ENCODE measurements at regions of chr1 and their contacts with region 1.

Region 1: GRCh38 chr1:40796939-40797667 is 13.5 kb downstream of the KCNQ4 start:
- DNase-seq: no peak
- ATAC-seq: no peak
- H3K4me3 ChIP-seq: no peak overlapping the region
- H3K27ac ChIP-seq: no peak overlapping the region
- H3K4me1 ChIP-seq: peaks cover 17 to 35% of the 10 kb centered on the region in 2 experiments
- H3K27me3 ChIP-seq: no peaks in the 10 kb centered on the region
- CTCF ChIP-seq: no peak
- EP300 ChIP-seq: no peak
- POLR2A ChIP-seq: no peak
- RAD21 ChIP-seq: no peak

Region 2: GRCh38 chr1:40704817-40705733 is 92.0 kb before region 1 on chr1:
- CTCF ChIA-PET with region 1: no interaction called
- POLR2A ChIA-PET with region 1: no interaction called
- in situ Hi-C with region 1: no loop called
- intact Hi-C with region 1: no loop called
- DNase-seq: peak; percentile 28 to 68 (median 38)
- ATAC-seq: no peak
- H3K4me3 ChIP-seq: no peak overlapping the region
- H3K27ac ChIP-seq: peak overlapping the region; percentile 5; the same call in 1 of the 3 replicates
- H3K4me1 ChIP-seq: peaks cover 0 to 26% of the 10 kb centered on the region in 2 experiments; a peak in 4 of 5 replicates
- H3K27me3 ChIP-seq: no peaks in the 10 kb centered on the region
- CTCF ChIP-seq: no peak
- EP300 ChIP-seq: peak; percentile 26; the same call in 1 of the 2 replicates
- POLR2A ChIP-seq: no peak
- RAD21 ChIP-seq: no peak

Region 3: GRCh38 chr1:40783001-40783905 is 13.8 kb before region 1 on chr1 and contains the start of gene KCNQ4:
- CTCF ChIA-PET with region 1: no interaction called
- POLR2A ChIA-PET with region 1: interaction called, 17 read pairs
- in situ Hi-C with region 1: no loop called
- intact Hi-C with region 1: no loop called
- DNase-seq: peak; percentile 79 to 90 (median 84)
- ATAC-seq: peak; percentile 76
- H3K4me3 ChIP-seq: peak within 1 kb of the TSS; percentile 37
- H3K27ac ChIP-seq: peak within 1 kb of the TSS; percentile 47; the same call in 1 of the 3 replicates
- H3K4me1 ChIP-seq: peaks cover 15 to 32% of the 10 kb centered on the region in 2 experiments
- H3K27me3 ChIP-seq: no peaks in the 10 kb centered on the region
- CTCF ChIP-seq: no peak
- EP300 ChIP-seq: no peak
- POLR2A ChIP-seq: no peak
- RAD21 ChIP-seq: no peak
- polyA plus RNA-seq, gene KCNQ4: 0.07 to 0.27 TPM

Region 4: GRCh38 chr1:40849801-40850592 is 52.9 kb after region 1 on chr1:
- CTCF ChIA-PET with region 1: no interaction called
- POLR2A ChIA-PET with region 1: no interaction called
- in situ Hi-C with region 1: no loop called
- intact Hi-C with region 1: no loop called
- DNase-seq: peak; percentile 79 to 89 (median 80)
- ATAC-seq: peak; percentile 94
- H3K4me3 ChIP-seq: no peak overlapping the region
- H3K27ac ChIP-seq: no peak overlapping the region
- H3K4me1 ChIP-seq: peaks cover 6 to 18% of the 10 kb centered on the region in 2 experiments; a peak in 4 of 5 replicates
- H3K27me3 ChIP-seq: no peaks in the 10 kb centered on the region
- CTCF ChIP-seq: peak; percentile 92 to 99 (median 96)
- EP300 ChIP-seq: no peak
- POLR2A ChIP-seq: no peak
- RAD21 ChIP-seq: peak; percentile 90 to 97

Measured in K562 (cell line).